Kidney (tissue), 22 donors: ENCODE measurements at regions of chr20 and their contacts with region 1.

Region 1: GRCh38 chr20:20083807-20084206 is 31.5 kb downstream of the CFAP61 start:
- DNase-seq: peak in 2 of 5 donors; percentile 46 to 59
- H3K4me3 ChIP-seq: peak overlapping the region in 1 of 3 donors; percentile 29
- H3K27ac ChIP-seq: no peak overlapping the region
- H3K4me1 ChIP-seq: peaks cover 0 to 1% (median 0%) of the 10 kb centered on the region in 3 donors
- H3K27me3 ChIP-seq: no peaks in the 10 kb centered on the region
- CTCF ChIP-seq: peak; percentile 49

Region 2: GRCh38 chr20:20207872-20208271 is 124.1 kb after region 1 on chr20:
- intact Hi-C with region 1: no loop called
- DNase-seq: no peak
- H3K4me3 ChIP-seq: no peak overlapping the region
- H3K27ac ChIP-seq: peak overlapping the region; percentile 54 to 68
- H3K4me1 ChIP-seq: peaks cover 0 to 6% (median 0%) of the 10 kb centered on the region in 3 donors
- H3K27me3 ChIP-seq: no peaks in the 10 kb centered on the region
- CTCF ChIP-seq: no peak

Region 3: DNA sequence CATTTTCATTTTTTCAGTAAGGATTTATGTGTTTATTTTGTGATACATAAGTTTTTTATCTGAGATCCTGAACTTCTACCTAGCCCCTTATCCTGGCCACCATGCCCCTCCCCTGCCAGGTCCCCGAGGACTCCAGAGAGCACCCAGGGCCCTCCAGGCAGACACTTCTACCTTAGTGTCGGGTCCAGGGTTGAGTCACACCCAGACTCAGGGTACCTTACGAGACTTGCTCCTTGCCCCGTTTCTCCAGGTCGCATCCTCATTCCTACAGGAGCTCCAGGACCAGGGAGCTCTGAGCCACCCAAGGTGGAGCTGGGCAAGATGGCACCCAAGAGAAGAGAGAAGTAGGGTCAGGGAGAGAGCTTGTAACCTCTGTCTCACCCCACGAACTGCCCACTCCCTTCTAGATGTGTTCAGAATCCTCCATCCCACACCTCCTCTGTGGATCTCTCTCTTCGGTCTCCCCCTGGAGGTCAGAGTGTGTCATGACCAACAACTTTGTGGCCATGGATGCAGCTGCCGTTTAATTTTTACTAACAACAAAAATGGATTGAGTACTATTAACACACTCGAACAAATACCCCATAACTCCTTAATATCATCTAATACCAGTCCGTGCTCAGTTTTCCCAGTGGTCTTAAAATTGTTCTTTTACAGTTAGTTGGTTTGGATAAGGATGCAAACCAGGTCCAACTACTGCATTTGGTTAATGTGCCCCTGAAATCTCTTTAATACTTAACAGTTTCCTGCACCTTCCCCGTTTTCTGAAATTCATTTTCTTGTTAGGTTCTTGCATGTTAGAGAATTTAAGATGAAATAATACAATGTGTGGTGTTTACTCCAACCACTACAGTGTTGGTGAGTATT is 153.5 kb after region 1 on chr20:
- intact Hi-C with region 1: loop called (anchors 10 kb)
- DNase-seq: peak in 3 of 5 donors; percentile 32 to 69 (median 37)
- H3K4me3 ChIP-seq: no peak overlapping the region
- H3K27ac ChIP-seq: no peak overlapping the region
- H3K4me1 ChIP-seq: no peaks in the 10 kb centered on the region
- H3K27me3 ChIP-seq: no peaks in the 10 kb centered on the region
- CTCF ChIP-seq: peak; percentile 74

Region 4: DNA sequence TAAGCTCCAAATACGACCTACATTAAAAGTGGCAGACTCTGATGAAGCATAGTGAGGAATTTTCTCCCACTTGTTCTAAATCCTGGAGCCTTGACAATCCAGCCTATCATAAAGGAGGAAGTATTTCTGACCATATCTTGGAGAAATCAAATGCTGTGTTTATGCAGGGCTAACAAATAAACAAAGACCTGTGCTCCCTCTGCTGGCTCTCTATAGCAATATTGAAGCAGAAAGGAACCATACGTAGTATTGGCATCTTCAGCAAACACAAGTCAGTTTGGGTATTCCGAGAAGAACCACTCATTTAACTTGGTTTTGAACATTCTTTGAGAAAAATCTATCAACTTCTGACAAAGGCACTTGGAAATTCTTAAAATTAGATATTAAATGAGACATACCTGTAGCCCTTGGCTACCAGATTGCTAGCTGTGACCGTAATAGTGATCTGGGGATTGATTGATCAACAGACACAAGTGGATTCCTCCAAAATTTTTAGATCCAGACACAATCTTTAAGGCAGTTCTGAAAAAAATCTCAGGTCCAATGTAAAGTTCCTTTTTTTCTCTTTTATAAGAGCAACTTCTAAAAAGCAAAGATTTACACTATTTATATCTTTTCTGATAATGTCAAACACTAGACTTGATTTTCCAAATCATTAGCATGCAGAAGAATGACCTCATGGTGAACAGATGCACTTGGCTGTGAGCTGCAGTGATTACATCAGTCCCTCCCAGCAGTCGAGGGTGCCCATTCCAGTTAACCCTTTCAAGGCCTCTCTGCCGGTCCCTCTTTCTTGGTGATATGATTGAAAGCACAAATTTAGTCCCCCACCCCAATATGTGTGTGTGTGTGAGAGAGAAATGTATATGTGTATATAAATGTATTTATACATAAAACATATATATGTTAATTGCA is 324.3 kb after region 1 on chr20:
- intact Hi-C with region 1: no loop called
- DNase-seq: peak in 1 of 5 donors; percentile 56
- H3K4me3 ChIP-seq: no peak overlapping the region
- H3K27ac ChIP-seq: no peak overlapping the region
- H3K4me1 ChIP-seq: no peaks in the 10 kb centered on the region
- H3K27me3 ChIP-seq: peaks cover 2% of the 10 kb centered on the region
- CTCF ChIP-seq: no peak